Activated CD8-positive, alpha-beta memory T cell treated with anti-CD3 and anti-CD28 coated beads, Interleukin-2, amount 10 ng/mL, durations not matched to agents 7 days and 5 days (primary cell): ENCODE measurements at regions of chr19 and their contacts with region 1.

Region 1: GRCh38 chr19:39792999-39793546 is 14.4 kb downstream of the LEUTX start:
- DNase-seq: peak; percentile 82
- ATAC-seq: peak; percentile 95
- H3K4me3 Mint-ChIP-seq: peak overlapping the region; percentile 75
- H3K27ac Mint-ChIP-seq: peak overlapping the region; percentile 43
- H3K4me1 Mint-ChIP-seq: peaks cover 26% of the 10 kb centered on the region
- H3K27me3 Mint-ChIP-seq: peaks cover 18% of the 10 kb centered on the region

Region 2: GRCh38 chr19:39728040-39728439 is 65.0 kb before region 1 on chr19:
- CTCF ChIA-PET with region 1: no interaction called
- DNase-seq: no peak
- ATAC-seq: no peak
- H3K4me3 Mint-ChIP-seq: no peak overlapping the region
- H3K27ac Mint-ChIP-seq: no peak overlapping the region
- H3K4me1 Mint-ChIP-seq: no peaks in the 10 kb centered on the region
- H3K27me3 Mint-ChIP-seq: peaks cover 50% of the 10 kb centered on the region

Region 3: DNA sequence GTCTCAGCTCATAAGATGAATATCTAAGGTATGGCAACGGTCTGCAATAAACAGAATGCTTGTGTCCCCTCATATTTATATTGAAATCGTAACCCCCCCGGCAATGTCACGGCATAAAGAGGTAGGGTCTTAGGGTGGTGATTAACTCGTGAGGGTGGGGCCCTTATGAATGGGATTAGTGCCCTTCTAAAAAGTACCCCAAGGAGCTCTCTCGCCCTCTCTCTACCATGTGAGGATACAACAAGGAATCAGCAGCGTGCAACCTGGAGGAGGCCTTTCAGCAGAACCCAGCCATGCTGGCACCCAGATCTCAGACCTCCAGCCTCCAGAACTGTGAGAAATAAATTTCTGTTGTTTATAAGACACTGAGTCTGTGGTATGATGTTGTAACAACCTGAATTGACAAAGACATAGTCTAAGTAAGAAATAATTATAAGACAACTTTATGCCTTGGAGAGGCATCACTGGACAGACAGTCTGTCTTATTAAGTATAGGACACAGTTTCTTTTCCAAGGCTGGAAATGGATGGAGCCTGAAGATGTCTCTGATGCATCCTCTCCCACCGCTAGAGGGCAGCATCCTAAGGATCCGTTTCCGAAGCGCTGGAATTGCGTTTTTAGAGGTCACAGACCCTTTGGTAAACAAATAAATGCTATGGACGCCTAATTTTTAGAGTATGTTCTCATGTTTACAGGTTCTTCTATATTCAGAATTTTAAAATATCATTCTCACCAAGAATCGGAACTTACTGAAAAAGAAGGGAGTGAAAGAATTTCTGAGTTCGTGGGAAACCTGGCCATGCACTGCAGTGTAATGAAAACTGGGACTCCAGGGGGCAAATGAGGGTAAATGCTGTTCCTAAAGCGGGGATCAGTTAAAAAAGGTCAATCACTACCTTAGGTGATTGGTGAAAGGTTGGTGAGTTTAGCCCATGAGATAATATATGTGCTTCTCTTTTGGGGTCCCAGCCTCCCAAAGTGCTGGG is 27.7 kb before region 1 on chr19:
- CTCF ChIA-PET with region 1: interaction called, 19 read pairs
- DNase-seq: no peak
- ATAC-seq: no peak
- H3K4me3 Mint-ChIP-seq: no peak overlapping the region
- H3K27ac Mint-ChIP-seq: no peak overlapping the region
- H3K4me1 Mint-ChIP-seq: peaks cover 8% of the 10 kb centered on the region
- H3K27me3 Mint-ChIP-seq: peaks cover 41% of the 10 kb centered on the region

Region 4: DNA sequence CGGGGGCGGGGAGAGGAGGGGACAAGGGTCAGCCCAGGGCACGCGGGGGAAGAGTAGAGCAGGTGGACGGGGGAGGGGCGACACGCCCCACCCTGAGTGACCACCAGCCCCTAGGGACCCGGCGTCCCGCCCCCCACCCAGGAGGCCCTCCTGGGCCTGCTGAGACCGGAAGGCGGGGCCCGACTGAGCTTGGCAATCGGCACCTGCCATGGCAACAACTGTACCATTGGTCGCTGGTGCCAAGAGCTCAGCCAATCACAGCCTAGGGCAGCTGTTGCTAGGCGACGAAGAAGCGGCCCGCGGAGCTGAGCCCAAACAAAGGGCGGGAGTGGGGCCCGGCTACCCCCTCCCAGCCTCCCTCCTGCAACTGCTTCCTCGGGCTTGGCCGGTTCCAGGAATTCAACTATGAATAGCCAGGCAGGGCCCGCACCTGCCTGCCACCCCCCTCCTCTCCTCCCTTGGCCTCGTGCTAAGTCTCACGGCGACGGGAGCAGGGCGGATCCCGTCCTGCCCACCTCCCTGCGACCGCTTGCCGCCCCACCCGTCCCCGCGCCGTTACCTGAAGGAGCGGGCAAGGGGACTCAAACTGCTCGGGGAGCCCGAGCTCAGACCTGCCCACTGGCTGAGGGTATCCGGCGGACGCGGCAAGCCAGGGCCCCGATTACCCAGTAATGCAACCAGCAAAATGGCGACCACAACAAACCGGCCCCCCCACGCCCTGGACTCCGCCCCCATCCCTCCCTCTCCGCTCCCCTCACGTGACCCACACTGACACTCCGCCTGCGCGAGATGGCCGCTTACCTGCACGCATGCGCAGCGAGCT is 40.6 kb after region 1 on chr19 and contains the start of gene DYRK1B:
- CTCF ChIA-PET with region 1: interaction called, 16 read pairs
- DNase-seq: peak; percentile 99
- ATAC-seq: peak; percentile 90
- H3K4me3 Mint-ChIP-seq: peak within 1 kb of the TSS; percentile 69
- H3K27ac Mint-ChIP-seq: peak within 1 kb of the TSS; percentile 79
- H3K4me1 Mint-ChIP-seq: peaks cover 28% of the 10 kb centered on the region
- H3K27me3 Mint-ChIP-seq: no peaks in the 10 kb centered on the region
- total RNA-seq, gene DYRK1B: 7.5 to 7.7 TPM

Region 5: GRCh38 chr19:39916851-39917396 is 123.9 kb after region 1 on chr19:
- CTCF ChIA-PET with region 1: no interaction called
- DNase-seq: no peak
- ATAC-seq: no peak
- H3K4me3 Mint-ChIP-seq: no peak overlapping the region
- H3K27ac Mint-ChIP-seq: no peak overlapping the region
- H3K4me1 Mint-ChIP-seq: no peaks in the 10 kb centered on the region
- H3K27me3 Mint-ChIP-seq: no peaks in the 10 kb centered on the region